CD4-positive, alpha-beta T cell (primary cell): ENCODE measurements at regions of chr17 and their contacts with region 1.

Region 1: GRCh38 chr17:55635253-55635914 is 87.3 kb downstream of the TMEM100 start:
- DNase-seq: no peak
- ATAC-seq: no peak
- H3K4me3 ChIP-seq: no peak overlapping the region
- H3K4me3 Mint-ChIP-seq: no peak overlapping the region
- H3K27ac ChIP-seq: no peak overlapping the region
- H3K27ac Mint-ChIP-seq: no peak overlapping the region
- H3K4me1 ChIP-seq: no peaks in the 10 kb centered on the region
- H3K4me1 Mint-ChIP-seq: no peaks in the 10 kb centered on the region
- H3K27me3 ChIP-seq: peaks cover 0 to 6% of the 10 kb centered on the region in 2 experiments
- H3K27me3 Mint-ChIP-seq: peaks cover 20% of the 10 kb centered on the region
- CTCF ChIP-seq: no peak

Region 2: DNA sequence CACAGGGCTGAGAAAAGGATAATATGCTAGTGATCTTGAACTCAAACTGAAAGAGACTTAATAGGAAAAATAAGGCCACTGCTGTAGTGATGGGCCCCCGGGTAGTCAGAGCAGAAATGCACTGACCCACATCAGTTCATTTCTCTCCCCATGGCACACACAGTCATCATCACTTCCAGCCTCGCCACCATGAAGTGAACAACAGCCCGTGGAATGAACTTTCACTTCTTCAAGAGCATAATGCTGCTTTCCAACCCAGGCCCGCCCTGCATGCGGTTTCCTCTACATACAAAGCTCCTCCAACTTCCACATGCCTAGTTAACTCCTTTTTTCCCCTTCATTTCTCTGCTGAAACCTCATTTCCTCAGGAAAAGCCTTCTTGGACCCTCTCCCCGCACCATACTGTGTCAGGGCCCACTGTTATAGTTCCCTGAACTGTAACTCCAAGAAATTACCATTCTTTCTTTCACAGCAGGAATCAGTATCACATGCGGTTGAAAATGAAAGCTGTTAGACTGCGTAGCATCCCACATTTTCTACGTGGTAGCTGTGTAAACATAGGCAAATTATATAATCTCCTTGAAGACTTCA is 58.3 kb before region 1 on chr17:
- CTCF ChIA-PET with region 1: no interaction called
- POLR2A ChIA-PET with region 1: no interaction called
- intact Hi-C with region 1: loop called in 1 of 2 experiments (anchors 10 kb)
- DNase-seq: peak; percentile 5 to 74 (median 32)
- ATAC-seq: peak; percentile 82
- H3K4me3 ChIP-seq: peak overlapping the region; percentile 56
- H3K4me3 Mint-ChIP-seq: no peak overlapping the region
- H3K27ac ChIP-seq: peak overlapping the region; percentile 42 to 71
- H3K27ac Mint-ChIP-seq: no peak overlapping the region
- H3K4me1 ChIP-seq: peaks cover 26% of the 10 kb centered on the region
- H3K4me1 Mint-ChIP-seq: peaks cover 6% of the 10 kb centered on the region
- H3K27me3 ChIP-seq: no peaks in the 10 kb centered on the region
- H3K27me3 Mint-ChIP-seq: no peaks in the 10 kb centered on the region
- CTCF ChIP-seq: no peak

Region 3: GRCh38 chr17:55683554-55684315 is 48.4 kb after region 1 on chr17:
- CTCF ChIA-PET with region 1: no interaction called
- POLR2A ChIA-PET with region 1: no interaction called
- intact Hi-C with region 1: loop called in 1 of 2 experiments (anchors 10 kb)
- DNase-seq: no peak
- ATAC-seq: no peak
- H3K4me3 ChIP-seq: no peak overlapping the region
- H3K4me3 Mint-ChIP-seq: no peak overlapping the region
- H3K27ac ChIP-seq: no peak overlapping the region
- H3K27ac Mint-ChIP-seq: no peak overlapping the region
- H3K4me1 ChIP-seq: no peaks in the 10 kb centered on the region
- H3K4me1 Mint-ChIP-seq: no peaks in the 10 kb centered on the region
- H3K27me3 ChIP-seq: peaks cover 3 to 15% of the 10 kb centered on the region in 2 experiments
- H3K27me3 Mint-ChIP-seq: peaks cover 45% of the 10 kb centered on the region
- CTCF ChIP-seq: no peak